ENCODE measurements at regions of chr5 and their contacts with region 1.

Region 1: GRCh38 chr5:179697993-179698934 is 503 bp upstream of the CANX start:
- DNase-seq: peak; percentile 99
- ATAC-seq: peak; percentile 95 to 98 (median 97)
- H3K4me3 ChIP-seq: peak overlapping the region; percentile 30 to 99 (median 89)
- H3K27ac ChIP-seq: peak overlapping the region; percentile 85 to 100 (median 97)
- H3K4me1 ChIP-seq: peaks cover 4 to 54% (median 39%) of the 10 kb centered on the region in 9 donors
- H3K27me3 ChIP-seq: no peaks in the 10 kb centered on the region
- CTCF ChIP-seq: peak in 6 of 9 donors; percentile 7 to 25 (median 10)

Region 2: GRCh38 chr5:179613460-179614071 is 84.7 kb before region 1 on chr5:
- intact Hi-C with region 1: no loop called
- DNase-seq: no peak
- ATAC-seq: no peak
- H3K4me3 ChIP-seq: no peak overlapping the region
- H3K27ac ChIP-seq: no peak overlapping the region
- H3K4me1 ChIP-seq: peaks cover 4 to 68% (median 44%) of the 10 kb centered on the region in 9 donors
- H3K27me3 ChIP-seq: no peaks in the 10 kb centered on the region
- CTCF ChIP-seq: no peak

Region 3: GRCh38 chr5:179678223-179679013 is 19.8 kb before region 1 on chr5:
- intact Hi-C with region 1: loop called in 3 of 10 experiments (anchors 1 kb)
- DNase-seq: peak; percentile 95 to 97
- ATAC-seq: peak; percentile 97 to 99 (median 98)
- H3K4me3 ChIP-seq: peak overlapping the region; percentile 57 to 95 (median 82)
- H3K27ac ChIP-seq: peak overlapping the region; percentile 23 to 95 (median 90)
- H3K4me1 ChIP-seq: peaks cover 10 to 36% (median 22%) of the 10 kb centered on the region in 9 donors
- H3K27me3 ChIP-seq: no peaks in the 10 kb centered on the region
- CTCF ChIP-seq: peak in 1 of 9 donors; percentile 5

Region 4: DNA sequence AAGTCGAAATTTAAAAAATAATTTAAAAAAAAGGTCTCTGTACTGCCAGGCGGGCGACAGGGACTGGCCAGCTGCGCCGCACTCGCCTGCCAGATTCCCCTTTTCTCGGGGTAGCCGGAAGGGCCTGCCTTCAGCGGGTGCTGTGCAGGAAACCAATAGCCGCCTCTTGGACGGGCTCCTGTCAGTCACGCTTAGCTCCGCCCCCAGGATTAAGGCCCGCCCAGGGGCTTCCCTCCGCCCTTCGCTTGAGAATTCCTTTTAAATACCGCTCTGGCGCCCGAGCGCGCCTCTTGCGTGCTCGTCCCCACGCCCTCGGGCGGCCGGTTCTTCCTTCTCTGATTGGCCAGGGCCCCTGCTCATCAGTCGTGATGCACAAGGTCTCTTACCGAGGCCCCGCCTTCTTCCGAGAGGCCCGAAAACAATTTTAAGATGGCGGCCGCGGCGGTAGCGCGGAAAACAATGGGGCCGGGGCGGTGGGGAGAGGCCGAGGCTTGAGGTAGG is 34.2 kb after region 1 on chr5 and contains the start of gene MAML1:
- intact Hi-C with region 1: loop called in 4 of 10 experiments (anchors 1 to 5 kb)
- DNase-seq: peak; percentile 99 to 100
- ATAC-seq: peak; percentile 99 to 100 (median 99)
- H3K4me3 ChIP-seq: peak within 1 kb of the TSS; percentile 60 to 99 (median 74)
- H3K27ac ChIP-seq: peak within 1 kb of the TSS; percentile 82 to 98 (median 96)
- H3K4me1 ChIP-seq: peaks cover 8 to 54% (median 44%) of the 10 kb centered on the region in 9 donors
- H3K27me3 ChIP-seq: no peaks in the 10 kb centered on the region
- CTCF ChIP-seq: no peak
- total RNA-seq, gene MAML1: 10.0 to 15.3 (median 12.5) TPM

Measured in heart right ventricle (tissue), 16 donors.